ENCODE measurements at regions of chr16 and their contacts with region 1.

Region 1: DNA sequence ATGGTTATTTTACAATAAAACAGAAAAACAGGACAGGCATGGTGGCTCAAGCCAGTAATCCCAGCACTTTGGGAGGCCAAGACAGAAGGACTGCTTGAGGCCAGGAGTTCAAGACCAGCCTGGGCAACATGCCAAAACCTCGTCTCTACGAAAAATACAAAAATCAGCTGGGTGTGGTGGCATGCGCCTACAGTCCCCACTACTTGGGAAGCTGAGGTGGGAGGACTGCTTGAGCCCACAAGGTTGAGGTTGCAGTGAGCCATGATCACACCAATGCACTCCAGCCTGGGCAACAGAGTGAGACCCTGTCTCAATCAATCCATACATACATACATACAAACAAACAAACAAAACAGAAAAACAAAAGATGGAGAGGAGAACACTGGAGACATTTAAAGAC is 45.6 kb downstream of the USP31 start:
- DNase-seq: no peak

Region 2: GRCh38 chr16:23148513-23149348 is 45.1 kb after region 1 on chr16:
- intact Hi-C with region 1: loop called in 1 of 2 experiments (anchors 1 kb)
- DNase-seq: peak; percentile 89

Region 3: DNA sequence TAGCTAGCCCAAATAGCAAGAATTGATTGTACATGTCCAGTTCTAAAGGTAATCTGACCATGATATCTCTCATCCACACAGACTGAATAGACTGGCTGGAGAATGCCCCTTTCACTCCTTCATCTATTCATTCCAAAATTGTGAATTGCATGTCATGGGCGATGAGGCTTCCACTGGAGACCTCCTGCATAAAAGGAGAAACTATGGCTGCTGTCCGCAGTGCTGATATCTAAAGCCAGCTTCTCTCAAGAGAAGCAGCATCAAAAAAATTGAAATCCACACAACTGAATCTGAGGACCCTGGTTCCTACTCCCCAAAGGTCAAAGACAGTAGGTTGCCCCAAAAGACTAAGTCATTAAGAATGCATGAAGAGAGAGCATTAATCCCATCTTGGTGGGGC is 71.0 kb after region 1 on chr16:
- intact Hi-C with region 1: no loop called
- DNase-seq: no peak

Measured in posterior vena cava (tissue), 2 donors.